Activated CD4-positive, alpha-beta memory T cell treated with anti-CD3 and anti-CD28 coated beads for 36 hours (primary cell): ENCODE measurements at regions of chr6 and their contacts with region 1.

Region 1: GRCh38 chr6:28863604-28864320 is 60.0 kb downstream of the TRIM27 start:
- DNase-seq: peak; percentile 90
- H3K4me3 Mint-ChIP-seq: peak overlapping the region; percentile 82
- H3K27ac Mint-ChIP-seq: peak overlapping the region; percentile 91
- H3K4me1 Mint-ChIP-seq: peaks cover 38% of the 10 kb centered on the region
- H3K27me3 Mint-ChIP-seq: peaks cover 5% of the 10 kb centered on the region

Region 2: GRCh38 chr6:28880894-28881780 is 17.4 kb after region 1 on chr6:
- CTCF ChIA-PET with region 1: interaction called, 11 read pairs
- POLR2A ChIA-PET with region 1: interaction called, 19 read pairs
- intact Hi-C with region 1: loop called (anchors 1 kb)
- DNase-seq: peak; percentile 78
- H3K4me3 Mint-ChIP-seq: peak overlapping the region; percentile 65
- H3K27ac Mint-ChIP-seq: peak overlapping the region; percentile 24
- H3K4me1 Mint-ChIP-seq: peaks cover 28% of the 10 kb centered on the region
- H3K27me3 Mint-ChIP-seq: peaks cover 14% of the 10 kb centered on the region

Region 3: DNA sequence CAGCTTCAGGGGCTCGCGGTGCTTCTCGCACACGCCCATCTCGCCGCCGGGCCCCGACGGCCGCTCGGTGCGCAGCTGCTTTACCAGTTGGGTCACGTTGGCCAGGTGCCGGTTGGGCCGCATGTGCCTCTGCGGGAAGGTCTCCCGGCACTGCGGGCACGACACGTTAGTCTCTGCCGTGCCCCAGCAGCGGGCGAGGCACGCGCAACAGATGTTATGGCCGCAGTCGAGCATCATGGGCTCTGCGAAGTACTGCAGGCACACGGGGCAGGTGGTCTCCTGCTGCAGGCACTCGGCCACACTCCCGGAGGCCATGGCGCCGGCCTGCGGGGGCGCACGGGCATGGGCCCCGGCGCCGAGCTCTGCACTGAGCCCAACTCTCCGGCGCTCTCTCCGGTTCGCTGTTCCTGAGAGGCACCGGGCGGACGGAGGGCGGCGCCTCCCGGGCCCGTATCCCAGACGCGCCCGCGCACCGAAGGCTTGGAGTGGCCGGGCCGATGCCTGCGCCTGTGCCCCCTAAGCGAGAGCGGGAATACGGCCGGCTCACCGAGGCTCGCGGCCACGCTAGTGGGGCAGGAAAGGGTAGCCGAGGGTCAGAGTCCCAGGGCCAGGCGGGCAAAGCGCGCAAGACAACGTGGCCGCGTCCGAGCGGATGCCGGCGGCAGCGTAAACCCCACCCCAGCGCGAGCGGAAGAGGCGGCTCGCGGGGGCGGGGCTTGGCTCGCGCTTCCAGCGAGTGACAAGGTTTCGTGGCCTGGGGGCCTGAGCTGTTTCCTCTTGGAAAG is 59.7 kb after region 1 on chr6 and contains the start of gene TRIM27:
- CTCF ChIA-PET with region 1: interaction called, 4 read pairs
- POLR2A ChIA-PET with region 1: interaction called, 24 read pairs
- intact Hi-C with region 1: no loop called
- DNase-seq: peak; percentile 87
- H3K4me3 Mint-ChIP-seq: peak within 1 kb of the TSS; percentile 94
- H3K27ac Mint-ChIP-seq: peak within 1 kb of the TSS; percentile 94
- H3K4me1 Mint-ChIP-seq: peaks cover 38% of the 10 kb centered on the region
- H3K27me3 Mint-ChIP-seq: no peaks in the 10 kb centered on the region
- total RNA-seq, gene TRIM27: 49.7 to 54.6 TPM

Region 4: DNA sequence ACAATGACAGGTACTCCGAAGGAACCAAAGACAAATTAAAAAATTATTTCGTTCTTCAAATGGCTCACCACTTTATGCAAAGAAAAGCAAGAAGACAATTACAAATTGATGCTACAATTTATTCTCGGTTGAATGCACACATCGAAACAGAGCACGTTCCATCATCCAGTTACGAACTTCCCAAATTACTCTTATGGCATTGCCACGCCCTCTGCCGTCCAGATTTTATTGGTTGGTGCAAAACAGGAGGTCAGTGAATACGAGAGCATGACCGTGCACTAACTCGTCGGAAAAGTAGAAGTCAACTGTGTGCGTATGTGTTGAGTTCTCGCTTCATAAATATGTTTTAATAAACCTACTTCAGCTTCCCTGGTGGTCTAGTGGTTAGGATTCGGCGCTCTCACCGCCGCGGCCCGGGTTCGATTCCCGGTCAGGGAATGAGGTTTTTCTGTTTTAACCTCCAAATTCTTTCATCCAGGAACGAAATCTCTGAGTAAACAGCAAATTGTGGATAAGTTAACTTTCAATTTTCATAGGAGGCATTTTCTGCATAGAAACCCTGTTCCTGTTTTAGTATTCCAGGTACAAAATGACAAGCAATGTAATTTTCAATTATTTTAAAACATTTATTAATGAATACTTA is 118.2 kb after region 1 on chr6:
- CTCF ChIA-PET with region 1: interaction called, 3 read pairs
- POLR2A ChIA-PET with region 1: interaction called, 3 read pairs
- intact Hi-C with region 1: loop called (anchors 1 kb)
- DNase-seq: peak; percentile 80
- H3K4me3 Mint-ChIP-seq: peak overlapping the region; percentile 82
- H3K27ac Mint-ChIP-seq: peak overlapping the region; percentile 93
- H3K4me1 Mint-ChIP-seq: peaks cover 58% of the 10 kb centered on the region
- H3K27me3 Mint-ChIP-seq: peaks cover 27% of the 10 kb centered on the region